Activated CD4-positive, alpha-beta T cell treated with anti-CD3 and anti-CD28 coated beads for 36 hours (primary cell): ENCODE measurements at regions of chr7 and their contacts with region 1.

Region 1: DNA sequence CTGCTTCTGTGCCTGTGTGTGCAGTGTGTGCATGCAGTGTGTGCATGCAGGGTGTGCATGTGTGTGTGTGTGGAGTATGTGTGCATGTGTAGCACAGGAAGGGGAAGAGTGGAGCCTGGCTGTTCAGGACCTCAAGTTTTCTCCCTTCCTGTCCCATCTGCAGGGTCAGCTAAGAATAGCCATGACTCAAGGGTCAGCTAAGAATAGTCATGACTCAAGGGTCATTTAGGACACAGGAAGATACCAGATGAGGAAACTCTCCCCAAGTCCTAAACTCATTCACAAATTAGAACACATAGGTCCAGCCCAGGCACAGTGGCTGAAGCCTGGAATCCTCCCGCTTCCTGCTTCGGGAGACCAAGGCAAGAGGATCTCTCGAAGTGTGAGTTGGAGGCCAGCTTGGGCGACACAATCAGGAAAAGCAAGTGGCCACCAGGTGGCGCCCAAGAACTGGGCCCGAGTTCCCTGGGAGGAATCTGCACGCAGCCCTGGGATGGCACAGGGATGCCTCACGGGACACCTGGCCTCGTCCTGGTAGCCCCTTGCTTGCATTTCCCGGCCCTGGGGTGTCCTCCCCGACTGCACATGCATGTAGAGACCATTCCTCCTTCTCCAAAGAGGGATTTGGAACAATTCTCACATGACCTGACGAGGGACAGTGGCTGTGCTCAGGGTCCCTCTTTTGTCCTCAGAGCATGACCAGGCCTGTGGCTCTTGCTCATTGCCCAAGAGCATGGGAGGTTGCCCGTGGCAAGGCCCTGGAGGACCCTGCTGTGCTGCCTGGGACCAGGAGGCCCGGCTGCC is 21.4 kb upstream of the VOPP1 start:
- DNase-seq: peak; percentile 87
- ATAC-seq: peak; percentile 77
- H3K4me3 Mint-ChIP-seq: no peak overlapping the region
- H3K27ac Mint-ChIP-seq: no peak overlapping the region
- H3K4me1 Mint-ChIP-seq: peaks cover 11% of the 10 kb centered on the region
- H3K27me3 Mint-ChIP-seq: no peaks in the 10 kb centered on the region

Region 2: DNA sequence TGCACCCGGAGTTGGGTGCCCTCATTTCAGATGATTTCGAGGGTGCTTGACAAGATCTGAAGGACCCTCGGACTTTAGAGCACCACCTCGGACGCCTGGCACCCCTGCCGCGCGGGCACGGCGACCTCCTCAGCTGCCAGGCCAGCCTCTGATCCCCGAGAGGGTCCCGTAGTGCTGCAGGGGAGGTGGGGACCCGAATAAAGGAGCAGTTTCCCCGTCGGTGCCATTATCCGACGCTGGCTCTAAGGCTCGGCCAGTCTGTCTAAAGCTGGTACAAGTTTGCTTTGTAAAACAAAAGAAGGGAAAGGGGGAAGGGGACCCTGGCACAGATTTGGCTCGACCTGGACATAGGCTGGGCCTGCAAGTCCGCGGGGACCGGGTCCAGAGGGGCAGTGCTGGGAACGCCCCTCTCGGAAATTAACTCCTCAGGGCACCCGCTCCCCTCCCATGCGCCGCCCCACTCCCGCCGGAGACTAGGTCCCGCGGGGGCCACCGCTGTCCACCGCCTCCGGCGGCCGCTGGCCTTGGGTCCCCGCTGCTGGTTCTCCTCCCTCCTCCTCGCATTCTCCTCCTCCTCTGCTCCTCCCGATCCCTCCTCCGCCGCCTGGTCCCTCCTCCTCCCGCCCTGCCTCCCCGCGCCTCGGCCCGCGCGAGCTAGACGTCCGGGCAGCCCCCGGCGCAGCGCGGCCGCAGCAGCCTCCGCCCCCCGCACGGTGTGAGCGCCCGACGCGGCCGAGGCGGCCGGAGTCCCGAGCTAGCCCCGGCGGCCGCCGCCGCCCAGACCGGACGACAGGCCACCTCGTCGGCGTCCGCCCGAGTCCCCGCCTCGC is 575.1 kb before region 1 on chr7 and contains the start of gene EGFR:
- CTCF ChIA-PET with region 1: no interaction called
- POLR2A ChIA-PET with region 1: no interaction called
- intact Hi-C with region 1: no loop called
- DNase-seq: no peak
- ATAC-seq: no peak
- H3K4me3 Mint-ChIP-seq: no peak within 1 kb of the TSS
- H3K27ac Mint-ChIP-seq: no peak within 1 kb of the TSS
- H3K4me1 Mint-ChIP-seq: no peaks in the 10 kb centered on the region
- H3K27me3 Mint-ChIP-seq: peaks cover 57% of the 10 kb centered on the region
- total RNA-seq, gene EGFR: 0.09 TPM in 1 of 2 experiments, not detected in the other

Region 3: DNA sequence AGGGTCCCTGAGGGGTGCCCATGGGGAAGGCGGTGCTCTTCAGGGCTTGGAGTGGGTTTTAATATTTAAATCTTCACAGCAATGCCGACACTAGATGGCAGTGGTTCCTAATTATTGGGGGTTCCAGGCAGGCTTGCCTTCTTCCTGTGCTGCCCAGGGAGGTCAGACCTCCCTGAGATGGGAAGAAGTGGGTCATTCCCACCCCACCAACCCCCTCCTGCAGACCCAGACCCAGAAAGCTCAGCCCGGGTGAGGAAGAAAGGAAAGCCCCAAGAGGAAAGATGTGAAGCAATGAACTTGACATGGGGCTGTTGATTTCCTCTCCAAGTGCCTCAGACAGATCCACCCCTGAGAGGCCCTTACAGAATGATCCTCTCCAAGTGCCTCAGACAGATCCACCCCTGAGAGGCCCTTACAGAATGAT is 313.7 kb before region 1 on chr7:
- CTCF ChIA-PET with region 1: interaction called, 3 read pairs
- POLR2A ChIA-PET with region 1: no interaction called
- intact Hi-C with region 1: loop called in 1 of 2 experiments (anchors 5 kb)
- DNase-seq: peak; percentile 77
- ATAC-seq: peak; percentile 82
- H3K4me3 Mint-ChIP-seq: no peak overlapping the region
- H3K27ac Mint-ChIP-seq: no peak overlapping the region
- H3K4me1 Mint-ChIP-seq: no peaks in the 10 kb centered on the region
- H3K27me3 Mint-ChIP-seq: no peaks in the 10 kb centered on the region